ENCODE measurements at regions of chr5 and their contacts with region 1.

Region 1: DNA sequence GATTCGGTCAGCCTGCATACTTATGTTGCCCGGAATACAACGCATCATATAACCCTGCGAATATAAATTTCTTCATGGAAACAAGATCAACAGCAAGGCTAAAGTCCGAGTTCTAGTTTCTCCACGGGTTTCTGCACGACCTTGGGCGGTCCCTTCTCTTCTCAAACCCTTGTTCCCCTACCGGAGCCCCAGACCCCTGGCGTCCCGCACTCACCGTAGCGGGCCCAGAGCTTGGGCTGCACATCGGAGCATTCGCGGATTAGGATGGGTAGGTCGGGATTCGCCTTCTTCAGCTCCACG is 438 bp downstream of the NDUFA2 start:
- DNase-seq: no peak
- H3K4me3 Mint-ChIP-seq: peak overlapping the region; percentile 98
- H3K27ac Mint-ChIP-seq: peak overlapping the region; percentile 96
- H3K4me1 Mint-ChIP-seq: peaks cover 48% of the 10 kb centered on the region
- H3K27me3 Mint-ChIP-seq: no peaks in the 10 kb centered on the region

Region 2: DNA sequence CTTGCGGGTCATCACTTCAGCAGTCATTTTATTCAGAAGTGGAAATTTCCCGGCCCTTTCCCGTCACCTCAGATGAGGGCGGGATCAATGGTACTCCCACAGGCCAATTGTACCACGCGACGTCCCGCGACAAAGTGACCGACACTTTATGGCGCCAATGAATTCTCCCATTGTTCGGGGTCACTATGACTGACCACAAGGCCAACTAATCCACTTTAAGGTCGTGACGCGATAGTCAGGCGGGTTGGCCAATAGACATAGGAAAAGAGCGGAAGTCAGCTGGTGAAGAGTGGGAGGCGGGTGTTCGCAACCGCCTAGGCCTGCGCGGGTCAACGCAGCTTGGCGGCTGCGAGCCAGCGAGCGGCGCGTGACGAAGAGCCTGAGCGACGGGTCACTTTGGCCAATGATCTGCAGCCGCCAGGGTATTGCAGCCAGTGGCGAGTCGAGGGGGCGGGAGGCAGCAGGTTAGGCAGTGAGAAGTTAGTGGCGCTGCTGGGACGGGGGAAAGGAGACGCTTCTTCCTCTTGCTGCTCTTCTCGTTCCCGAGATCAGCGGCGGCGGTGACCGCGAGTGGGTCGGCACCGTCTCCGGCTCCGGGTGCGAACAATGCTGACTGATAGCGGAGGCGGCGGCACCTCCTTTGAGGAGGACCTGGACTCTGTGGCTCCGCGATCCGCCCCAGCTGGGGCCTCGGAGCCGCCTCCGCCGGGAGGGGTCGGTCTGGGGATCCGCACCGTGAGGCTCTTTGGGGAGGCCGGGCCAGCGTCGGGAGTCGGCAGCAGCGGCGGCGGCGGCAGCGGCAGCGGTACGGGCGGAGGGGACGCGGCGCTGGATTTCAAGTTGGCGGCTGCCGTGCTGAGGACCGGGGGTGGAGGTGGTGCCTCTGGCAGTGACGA is 245.4 kb before region 1 on chr5 and contains the start of gene ANKHD1:
- CTCF ChIA-PET with region 1: no interaction called
- POLR2A ChIA-PET with region 1: interaction called, 39 read pairs
- DNase-seq: peak; percentile 98
- H3K4me3 Mint-ChIP-seq: no peak within 1 kb of the TSS
- H3K27ac Mint-ChIP-seq: peak within 1 kb of the TSS; percentile 76
- H3K4me1 Mint-ChIP-seq: peaks cover 34% of the 10 kb centered on the region
- H3K27me3 Mint-ChIP-seq: no peaks in the 10 kb centered on the region
- total RNA-seq, gene ANKHD1: 109 to 122 TPM

Region 3: DNA sequence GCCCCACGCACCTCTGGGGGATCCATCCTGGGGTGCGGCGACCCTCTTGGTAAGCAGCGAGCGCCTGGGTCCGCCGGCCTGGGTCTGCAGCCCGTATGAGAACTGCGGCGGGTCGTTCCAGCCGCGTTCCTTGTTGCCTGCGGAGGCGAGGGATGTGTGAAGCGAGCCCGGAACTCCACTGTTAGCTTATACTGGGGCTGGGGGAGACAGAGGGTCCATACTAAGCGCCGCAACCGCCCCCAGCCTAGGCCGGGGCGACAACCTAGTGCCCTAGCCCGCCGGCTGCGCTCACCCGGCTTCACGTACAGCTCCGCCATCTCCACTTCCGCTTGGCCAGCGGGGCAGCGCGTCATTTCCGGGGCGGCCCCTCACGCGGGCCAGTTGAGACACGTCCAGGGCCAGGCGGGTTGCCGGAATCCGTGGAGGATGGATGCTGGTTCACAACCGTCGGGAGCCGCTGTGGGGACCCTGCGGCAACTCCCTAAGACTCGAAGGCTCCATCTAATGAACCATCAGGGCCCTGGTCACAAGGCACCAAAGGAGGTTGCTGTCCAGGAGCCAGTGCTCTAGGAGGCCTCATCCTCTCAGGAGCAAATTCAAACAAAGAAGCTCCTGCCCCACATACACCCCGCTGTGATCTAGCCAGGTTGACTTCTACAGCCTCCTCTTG is 89.7 kb before region 1 on chr5 and contains the start of gene SRA1:
- CTCF ChIA-PET with region 1: no interaction called
- POLR2A ChIA-PET with region 1: interaction called, 19 read pairs
- DNase-seq: peak; percentile 91
- H3K4me3 Mint-ChIP-seq: peak within 1 kb of the TSS; percentile 83
- H3K27ac Mint-ChIP-seq: peak within 1 kb of the TSS; percentile 79
- H3K4me1 Mint-ChIP-seq: peaks cover 50% of the 10 kb centered on the region
- H3K27me3 Mint-ChIP-seq: no peaks in the 10 kb centered on the region
- total RNA-seq, gene SRA1: 37.4 to 38.3 TPM

Region 4: DNA sequence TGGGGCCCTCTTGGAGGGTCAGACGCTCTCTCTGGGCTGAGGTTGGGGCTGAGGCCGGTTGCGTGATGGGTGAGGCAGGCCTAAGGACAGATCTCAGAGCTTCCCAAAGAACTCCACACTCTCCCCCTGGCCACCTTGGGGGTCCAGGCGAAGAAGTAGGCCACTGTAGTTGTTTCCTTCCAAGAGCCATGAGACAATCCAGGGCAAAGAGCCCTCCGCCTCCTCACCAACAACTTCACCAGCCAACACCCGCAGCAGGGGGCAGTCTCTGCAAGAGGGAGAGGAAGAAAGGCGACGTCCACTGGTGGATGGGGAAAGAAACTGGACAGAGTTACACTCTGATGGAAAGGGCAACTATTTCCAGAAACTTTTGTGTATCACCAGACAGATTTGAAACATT is 71.7 kb before region 1 on chr5:
- CTCF ChIA-PET with region 1: no interaction called
- POLR2A ChIA-PET with region 1: no interaction called
- DNase-seq: no peak
- H3K4me3 Mint-ChIP-seq: no peak overlapping the region
- H3K27ac Mint-ChIP-seq: no peak overlapping the region
- H3K4me1 Mint-ChIP-seq: peaks cover under 1% of the 10 kb centered on the region
- H3K27me3 Mint-ChIP-seq: peaks cover 1% of the 10 kb centered on the region

Region 5: DNA sequence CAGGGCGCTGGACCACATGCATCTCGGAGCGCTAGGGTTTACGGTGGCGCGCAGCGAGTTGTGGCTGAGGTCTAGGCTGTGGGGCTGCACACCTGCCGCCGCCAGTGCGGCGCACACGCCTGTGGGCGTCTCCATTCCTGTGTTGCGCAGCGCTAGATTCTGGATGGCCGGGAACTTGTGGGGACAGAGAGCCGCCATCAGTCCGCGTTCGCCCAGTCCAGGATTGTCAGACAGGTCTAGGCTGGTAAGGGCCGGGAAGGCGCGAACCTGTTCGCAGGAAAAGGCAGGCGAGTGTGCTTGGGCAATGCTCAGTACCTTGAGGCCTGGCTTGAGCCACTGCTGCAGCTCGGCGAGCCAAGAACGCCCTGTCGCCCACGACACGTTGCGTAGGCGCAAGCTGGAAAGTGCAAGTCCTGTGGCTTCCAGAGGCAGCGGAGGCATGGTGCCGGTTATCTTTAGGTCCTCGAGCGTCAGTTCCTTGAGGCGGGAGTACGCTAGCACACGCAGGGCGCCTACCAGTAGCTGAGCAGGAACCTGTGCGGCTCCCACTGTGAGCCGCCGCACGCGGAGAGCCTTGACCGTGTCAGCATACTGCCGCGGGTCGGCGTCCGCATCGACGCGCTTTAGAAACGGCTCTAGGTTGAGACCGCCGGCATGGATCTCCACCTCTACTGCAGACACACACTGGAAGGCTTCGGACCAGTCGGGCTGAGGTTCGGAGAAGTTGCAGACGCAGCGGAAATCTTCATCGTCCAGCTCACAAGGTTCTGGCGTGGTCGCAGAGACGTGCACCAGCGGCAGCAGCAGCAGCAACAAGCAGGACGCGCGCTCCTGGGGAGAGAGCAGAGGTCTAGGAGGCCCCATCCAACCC is 14.6 kb before region 1 on chr5:
- CTCF ChIA-PET with region 1: interaction called, 40 read pairs
- POLR2A ChIA-PET with region 1: interaction called, 12 read pairs
- DNase-seq: peak; percentile 52
- H3K4me3 Mint-ChIP-seq: peak overlapping the region; percentile 77
- H3K27ac Mint-ChIP-seq: no peak overlapping the region
- H3K4me1 Mint-ChIP-seq: peaks cover 36% of the 10 kb centered on the region
- H3K27me3 Mint-ChIP-seq: peaks cover 29% of the 10 kb centered on the region

Region 6: DNA sequence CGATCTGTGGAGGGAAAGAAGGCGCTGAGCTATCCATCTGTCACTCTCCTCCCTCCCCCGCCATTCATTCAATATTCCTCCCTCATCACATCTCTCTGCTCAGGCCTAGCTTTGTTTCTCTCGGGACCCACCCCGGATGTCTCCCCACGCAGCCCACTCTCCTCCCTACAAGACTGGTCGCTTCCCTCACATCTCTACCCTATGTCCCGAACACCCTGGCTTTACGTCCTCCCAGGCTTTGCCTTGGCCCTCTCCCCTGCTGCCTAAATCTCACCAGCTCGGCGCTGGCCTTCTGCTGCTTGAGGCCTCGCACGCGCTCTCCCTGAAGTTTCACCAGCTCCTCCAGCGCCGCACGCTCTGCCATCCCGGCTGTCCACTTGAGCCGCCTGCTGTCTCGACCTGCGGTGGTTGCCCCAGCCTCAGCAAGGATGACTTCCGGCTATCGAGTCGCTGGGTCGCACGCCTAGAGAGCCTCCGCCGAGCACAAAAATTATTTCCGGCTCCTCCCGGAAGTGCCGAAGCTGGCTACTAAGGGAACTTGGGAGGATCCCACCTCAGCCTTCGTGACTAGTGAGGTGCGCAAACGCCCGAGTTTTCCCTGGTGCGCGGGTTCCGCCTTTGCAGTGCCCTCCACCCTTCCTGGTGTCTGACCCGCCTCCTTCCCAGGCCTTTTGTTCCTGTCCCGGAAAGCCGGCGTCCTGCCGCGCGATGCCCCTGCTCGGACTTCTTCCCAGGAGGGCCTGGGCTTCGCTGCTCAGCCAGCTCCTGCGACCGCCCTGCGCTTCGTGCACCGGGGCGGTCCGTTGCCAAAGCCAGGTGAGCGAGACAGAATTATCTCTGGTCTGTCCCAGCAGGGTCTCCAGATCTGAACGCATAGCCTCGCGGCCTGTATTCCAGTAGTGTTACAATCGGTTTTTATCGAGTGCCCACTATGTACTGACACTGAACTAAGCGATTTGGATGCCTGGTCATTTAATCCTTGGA is 44.2 kb after region 1 on chr5 and contains the starts of genes HARS1 and HARS2:
- CTCF ChIA-PET with region 1: interaction called, 3 read pairs
- POLR2A ChIA-PET with region 1: interaction called, 50 read pairs
- DNase-seq: peak; percentile 85
- H3K4me3 Mint-ChIP-seq: peak within 1 kb of the TSS; percentile 98
- H3K27ac Mint-ChIP-seq: peak within 1 kb of the TSS; percentile 89
- H3K4me1 Mint-ChIP-seq: peaks cover 44% of the 10 kb centered on the region
- H3K27me3 Mint-ChIP-seq: no peaks in the 10 kb centered on the region
- total RNA-seq, gene HARS1: 66.0 to 70.2 TPM
- total RNA-seq, gene HARS2: 30.6 to 34.7 TPM

Region 7: GRCh38 chr5:140710899-140711552 is 64.0 kb after region 1 on chr5:
- CTCF ChIA-PET with region 1: interaction called, 6 read pairs
- POLR2A ChIA-PET with region 1: interaction called, 21 read pairs
- DNase-seq: peak; percentile 91
- H3K4me3 Mint-ChIP-seq: peak overlapping the region; percentile 80
- H3K27ac Mint-ChIP-seq: peak overlapping the region; percentile 90
- H3K4me1 Mint-ChIP-seq: peaks cover 23% of the 10 kb centered on the region
- H3K27me3 Mint-ChIP-seq: peaks cover 5% of the 10 kb centered on the region

Measured in activated CD4-positive, alpha-beta memory T cell treated with anti-CD3 and anti-CD28 coated beads, Interleukin-2, amount 10 ng/mL, durations not matched to agents 7 days and 5 days (primary cell).